ENCODE measurements at regions of chr18 and their contacts with region 1.

Region 1: GRCh38 chr18:47748847-47749599 is 181.4 kb downstream of the SMAD2 start:
- DNase-seq: peak; percentile 13
- ATAC-seq: peak; percentile 93
- H3K4me3 ChIP-seq: no peak overlapping the region
- H3K27ac ChIP-seq: no peak overlapping the region
- H3K4me1 ChIP-seq: peaks cover 0 to 4% of the 10 kb centered on the region in 2 experiments; a peak in 1 of 4 replicates
- H3K27me3 ChIP-seq: no peaks in the 10 kb centered on the region
- CTCF ChIP-seq: peak; percentile 91 to 98 (median 97)
- POLR2A ChIP-seq: no peak
- RAD21 ChIP-seq: peak; percentile 88

Region 2: GRCh38 chr18:47050468-47050867 is 698.6 kb before region 1 on chr18:
- CTCF ChIA-PET with region 1: no interaction called
- POLR2A ChIA-PET with region 1: no interaction called
- RAD21 ChIA-PET with region 1: no interaction called
- intact Hi-C with region 1: loop called (anchors 2 kb)
- DNase-seq: peak; percentile 54
- ATAC-seq: peak; percentile 71
- H3K4me3 ChIP-seq: no peak overlapping the region
- H3K27ac ChIP-seq: no peak overlapping the region
- H3K4me1 ChIP-seq: no peaks in the 10 kb centered on the region
- H3K27me3 ChIP-seq: peaks cover 56% of the 10 kb centered on the region; the same call in 1 of the 2 replicates
- CTCF ChIP-seq: peak; percentile 55 to 80 (median 63); a peak in 5 of 6 replicates
- POLR2A ChIP-seq: no peak
- RAD21 ChIP-seq: peak; percentile 78

Region 3: GRCh38 chr18:47283476-47283875 is 465.5 kb before region 1 on chr18:
- CTCF ChIA-PET with region 1: no interaction called
- POLR2A ChIA-PET with region 1: no interaction called
- RAD21 ChIA-PET with region 1: no interaction called
- intact Hi-C with region 1: loop called (anchors 10 kb)
- DNase-seq: peak; percentile 42
- ATAC-seq: peak; percentile 96
- H3K4me3 ChIP-seq: no peak overlapping the region
- H3K27ac ChIP-seq: no peak overlapping the region
- H3K4me1 ChIP-seq: no peaks in the 10 kb centered on the region
- H3K27me3 ChIP-seq: peaks cover 57% of the 10 kb centered on the region
- CTCF ChIP-seq: peak; percentile 38 to 81 (median 72); a peak in 5 of 6 replicates
- POLR2A ChIP-seq: no peak
- RAD21 ChIP-seq: peak; percentile 44; the same call in 1 of the 2 replicates

Region 4: GRCh38 chr18:47397671-47398319 is 351.2 kb before region 1 on chr18:
- CTCF ChIA-PET with region 1: no interaction called
- POLR2A ChIA-PET with region 1: no interaction called
- RAD21 ChIA-PET with region 1: no interaction called
- intact Hi-C with region 1: loop called (anchors 2 kb)
- DNase-seq: peak; percentile 8
- ATAC-seq: peak; percentile 65; the same call in 1 of the 2 replicates
- H3K4me3 ChIP-seq: no peak overlapping the region
- H3K27ac ChIP-seq: no peak overlapping the region
- H3K4me1 ChIP-seq: no peaks in the 10 kb centered on the region
- H3K27me3 ChIP-seq: 0 out of 2 replicates have a peak, but pooled peaks cover 7% of the 10 kb centered on the region
- CTCF ChIP-seq: peak; percentile 34 to 86 (median 65); a peak in 5 of 6 replicates
- POLR2A ChIP-seq: no peak
- RAD21 ChIP-seq: peak; percentile 45

Region 5: GRCh38 chr18:47595815-47596496 is 153.1 kb before region 1 on chr18:
- CTCF ChIA-PET with region 1: interaction called, 4 read pairs
- POLR2A ChIA-PET with region 1: no interaction called
- RAD21 ChIA-PET with region 1: no interaction called
- intact Hi-C with region 1: loop called (anchors 1 kb)
- DNase-seq: peak; percentile 10
- ATAC-seq: peak; percentile 61
- H3K4me3 ChIP-seq: no peak overlapping the region
- H3K27ac ChIP-seq: no peak overlapping the region
- H3K4me1 ChIP-seq: no peaks in the 10 kb centered on the region
- H3K27me3 ChIP-seq: no peaks in the 10 kb centered on the region; the same call in 1 of the 2 replicates
- CTCF ChIP-seq: peak; percentile 62 to 73 (median 65); a peak in 5 of 6 replicates
- POLR2A ChIP-seq: no peak
- RAD21 ChIP-seq: peak; percentile 57